GM12878 (cell line): ENCODE measurements at regions of chr1 and their contacts with region 1.

Region 1: GRCh38 chr1:236821091-236821627 is 26.1 kb downstream of the MTR start:
- DNase-seq: no peak
- ATAC-seq: no peak
- H3K4me3 ChIP-seq: no peak overlapping the region
- H3K27ac ChIP-seq: no peak overlapping the region
- H3K4me1 ChIP-seq: no peaks in the 10 kb centered on the region
- H3K27me3 ChIP-seq: no peaks in the 10 kb centered on the region
- CTCF ChIP-seq: no peak
- EP300 ChIP-seq: no peak
- POLR2A ChIP-seq: no peak
- RAD21 ChIP-seq: no peak

Region 2: DNA sequence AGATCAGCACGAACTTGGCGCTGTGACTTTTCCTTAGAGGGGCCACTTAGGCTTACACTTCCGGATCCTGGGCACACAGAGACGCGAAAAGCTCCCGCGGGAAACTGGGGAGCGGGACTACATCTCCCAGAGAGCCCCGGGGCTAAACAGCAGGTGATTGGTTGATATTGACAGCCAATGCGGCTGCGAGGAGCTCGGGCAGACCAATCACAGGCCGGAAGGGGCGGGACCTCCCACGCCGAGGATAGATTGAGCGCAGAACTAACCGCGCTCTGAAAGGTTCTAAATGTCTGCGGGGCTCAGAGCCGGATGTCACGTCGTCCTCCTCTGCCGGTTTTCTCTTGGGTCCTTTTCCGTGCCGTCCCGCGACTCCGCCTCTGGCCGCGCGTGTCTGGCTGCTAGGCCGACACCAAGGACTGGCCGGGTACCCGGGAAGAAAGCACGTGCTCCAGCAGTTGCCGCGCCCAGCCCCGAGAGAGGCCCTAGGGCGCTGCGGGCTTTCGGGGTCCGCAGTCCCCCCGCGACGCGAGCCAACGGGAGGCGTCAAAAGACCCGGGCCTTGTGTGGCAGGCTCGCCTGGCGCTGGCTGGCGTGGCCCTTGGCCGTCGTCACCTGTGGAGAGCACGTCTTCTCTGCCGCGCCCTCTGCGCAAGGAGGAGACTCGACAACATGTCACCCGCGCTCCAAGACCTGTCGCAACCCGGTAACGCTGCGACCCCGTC is 26.0 kb before region 1 on chr1 and contains the start of gene MTR:
- CTCF ChIA-PET with region 1: interaction called, 4 read pairs
- POLR2A ChIA-PET with region 1: no interaction called
- RAD21 ChIA-PET with region 1: no interaction called
- SMC1A ChIA-PET with region 1: interaction called, 10 read pairs
- in situ Hi-C with region 1: no loop called
- intact Hi-C with region 1: no loop called
- DNase-seq: peak; percentile 89
- ATAC-seq: peak; percentile 97
- H3K4me3 ChIP-seq: peak within 1 kb of the TSS; percentile 97
- H3K27ac ChIP-seq: peak within 1 kb of the TSS; percentile 95
- H3K4me1 ChIP-seq: peaks cover 3% of the 10 kb centered on the region
- H3K27me3 ChIP-seq: no peaks in the 10 kb centered on the region
- CTCF ChIP-seq: no peak
- EP300 ChIP-seq: no peak
- POLR2A ChIP-seq: peak; percentile 90
- RAD21 ChIP-seq: no peak
- polyA plus RNA-seq, gene MTR: 2.4 to 5.3 TPM

Region 3: GRCh38 chr1:236808564-236809130 is 12.5 kb before region 1 on chr1:
- CTCF ChIA-PET with region 1: no interaction called
- POLR2A ChIA-PET with region 1: no interaction called
- RAD21 ChIA-PET with region 1: no interaction called
- SMC1A ChIA-PET with region 1: no interaction called
- in situ Hi-C with region 1: no loop called
- intact Hi-C with region 1: no loop called
- DNase-seq: no peak
- ATAC-seq: no peak
- H3K4me3 ChIP-seq: no peak overlapping the region
- H3K27ac ChIP-seq: no peak overlapping the region
- H3K4me1 ChIP-seq: no peaks in the 10 kb centered on the region
- H3K27me3 ChIP-seq: no peaks in the 10 kb centered on the region
- CTCF ChIP-seq: no peak
- EP300 ChIP-seq: no peak
- POLR2A ChIP-seq: no peak
- RAD21 ChIP-seq: no peak